ENCODE measurements at regions of chr4 and their contacts with region 1.

Region 1: DNA sequence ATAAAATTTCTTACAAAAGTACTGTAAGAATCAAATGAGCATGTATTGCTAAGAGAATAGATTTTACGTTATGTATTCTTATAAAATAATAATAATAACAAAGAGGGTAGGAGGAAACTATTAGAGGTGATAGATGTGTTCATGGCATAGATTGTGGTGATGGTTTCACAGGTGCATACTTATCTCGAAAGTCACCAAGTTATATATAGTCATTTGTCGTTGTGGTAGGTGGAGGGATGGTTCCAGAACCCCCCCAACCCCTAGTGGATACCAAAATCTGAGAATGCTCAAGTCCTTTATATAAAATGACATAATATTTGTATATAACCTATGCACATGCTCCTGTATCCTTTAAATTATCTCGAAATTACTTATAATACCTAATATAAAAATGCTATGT is 36.7 kb upstream of the H2AZ1 start:
- DNase-seq: no peak
- H3K27ac ChIP-seq: no peak overlapping the region
- CTCF ChIP-seq: no peak

Region 2: GRCh38 chr4:99665983-99666382 is 320.8 kb before region 1 on chr4:
- CTCF ChIA-PET with region 1: no interaction called
- POLR2A ChIA-PET with region 1: no interaction called
- DNase-seq: no peak
- H3K27ac ChIP-seq: no peak overlapping the region
- CTCF ChIP-seq: no peak

Region 3: GRCh38 chr4:99998062-99998867 is 11.5 kb after region 1 on chr4:
- CTCF ChIA-PET with region 1: interaction called, 13 read pairs
- POLR2A ChIA-PET with region 1: no interaction called
- DNase-seq: peak; percentile 34
- H3K27ac ChIP-seq: no peak overlapping the region
- CTCF ChIP-seq: peak; percentile 48